Activated CD4-positive, alpha-beta T cell treated with anti-CD3 and anti-CD28 coated beads, Interleukin-2, amount 10 ng/mL, durations not matched to agents 7 days and 5 days (primary cell): ENCODE measurements at regions of chr11 and their contacts with region 1.

Region 1: DNA sequence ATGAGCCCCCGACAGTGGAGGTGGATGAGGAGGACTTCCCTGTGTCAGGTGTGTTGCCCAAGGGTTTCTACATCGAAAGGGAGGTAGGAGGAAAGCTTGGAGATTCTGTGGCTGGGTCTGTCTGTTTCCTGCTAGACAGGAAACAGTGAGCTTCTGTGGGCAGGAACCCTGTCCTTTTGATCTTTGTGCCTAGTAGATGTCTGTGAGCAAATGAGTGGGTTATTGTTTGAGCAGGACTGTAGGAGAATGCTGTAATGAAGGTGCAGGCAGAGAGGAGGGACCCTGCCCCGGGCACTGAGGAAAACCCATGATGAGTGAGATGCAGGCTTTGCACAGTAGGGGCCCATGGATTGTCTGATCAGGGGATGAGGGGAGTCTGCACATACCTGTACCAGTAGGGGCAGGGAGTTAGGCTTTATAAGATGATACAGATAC is 14.0 kb downstream of the USP35 start:
- DNase-seq: peak; percentile 74
- H3K4me3 Mint-ChIP-seq: peak overlapping the region; percentile 72
- H3K27ac Mint-ChIP-seq: peak overlapping the region; percentile 94
- H3K4me1 Mint-ChIP-seq: peaks cover 54% of the 10 kb centered on the region
- H3K27me3 Mint-ChIP-seq: no peaks in the 10 kb centered on the region

Region 2: GRCh38 chr11:78140392-78141077 is 62.2 kb before region 1 on chr11:
- CTCF ChIA-PET with region 1: no interaction called
- POLR2A ChIA-PET with region 1: interaction called, 19 read pairs
- DNase-seq: no peak
- H3K4me3 Mint-ChIP-seq: peak overlapping the region; percentile 98
- H3K27ac Mint-ChIP-seq: peak overlapping the region; percentile 83
- H3K4me1 Mint-ChIP-seq: peaks cover 53% of the 10 kb centered on the region
- H3K27me3 Mint-ChIP-seq: no peaks in the 10 kb centered on the region

Region 3: DNA sequence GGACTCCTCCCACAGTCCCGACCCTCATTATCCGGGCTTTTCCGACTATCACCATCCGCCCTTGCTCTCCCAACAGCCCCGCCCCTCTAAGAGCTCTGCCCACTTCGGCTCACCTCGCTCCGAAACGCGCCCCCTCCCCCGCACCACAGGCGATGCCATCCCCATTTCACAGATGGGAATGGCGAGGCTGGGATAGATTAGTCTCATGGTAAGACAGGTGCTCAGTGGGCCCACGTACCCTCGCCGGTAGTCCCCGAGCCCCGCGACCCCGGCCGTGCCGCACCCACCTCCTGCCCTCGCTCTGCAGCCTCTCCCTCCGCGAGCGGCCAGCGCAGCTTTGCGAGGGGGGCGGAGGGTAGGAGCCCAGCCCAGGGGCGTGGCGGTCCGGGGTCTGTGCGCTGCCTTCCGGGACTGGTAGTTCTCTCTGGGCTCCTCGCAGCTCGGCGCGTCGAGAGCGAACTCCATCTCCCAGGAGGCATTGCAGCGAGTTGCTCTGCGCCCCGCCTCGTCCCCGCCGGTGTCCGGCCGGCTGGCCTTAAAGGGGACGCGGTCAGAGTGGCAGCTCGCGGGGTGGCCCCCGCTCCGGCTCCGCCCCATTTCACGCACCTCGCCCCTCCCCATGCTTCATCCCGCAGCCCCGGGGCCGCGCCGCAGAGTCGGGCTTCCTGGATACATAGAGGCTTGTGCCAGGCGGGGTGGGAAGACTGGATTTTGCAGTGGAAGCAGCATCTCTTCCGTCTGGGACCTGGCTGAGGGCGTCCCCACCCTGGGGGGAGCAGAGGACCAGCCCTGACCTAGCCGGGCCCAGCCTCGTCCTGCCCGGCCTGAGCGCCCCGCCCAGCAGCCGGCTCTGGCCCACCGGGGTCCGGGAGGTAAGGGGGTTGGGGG is 14.2 kb before region 1 on chr11 and contains the starts of genes KCTD21 and USP35:
- CTCF ChIA-PET with region 1: interaction called, 24 read pairs
- POLR2A ChIA-PET with region 1: no interaction called
- DNase-seq: peak; percentile 94
- H3K4me3 Mint-ChIP-seq: peak within 1 kb of the TSS; percentile 90
- H3K27ac Mint-ChIP-seq: peak within 1 kb of the TSS; percentile 89
- H3K4me1 Mint-ChIP-seq: peaks cover 56% of the 10 kb centered on the region
- H3K27me3 Mint-ChIP-seq: no peaks in the 10 kb centered on the region
- total RNA-seq, gene KCTD21: 8.9 TPM
- total RNA-seq, gene USP35: 13.0 to 13.2 TPM

Region 4: GRCh38 chr11:78228467-78228866 is 25.7 kb after region 1 on chr11:
- CTCF ChIA-PET with region 1: no interaction called
- POLR2A ChIA-PET with region 1: no interaction called
- DNase-seq: peak; percentile 49
- H3K4me3 Mint-ChIP-seq: no peak overlapping the region
- H3K27ac Mint-ChIP-seq: no peak overlapping the region
- H3K4me1 Mint-ChIP-seq: peaks cover 57% of the 10 kb centered on the region
- H3K27me3 Mint-ChIP-seq: no peaks in the 10 kb centered on the region

Region 5: GRCh38 chr11:78574386-78575381 is 371.9 kb after region 1 on chr11 and contains the start of gene NARS2:
- CTCF ChIA-PET with region 1: no interaction called
- POLR2A ChIA-PET with region 1: interaction called, 10 read pairs
- DNase-seq: peak; percentile 98
- H3K4me3 Mint-ChIP-seq: peak within 1 kb of the TSS; percentile 90
- H3K27ac Mint-ChIP-seq: peak within 1 kb of the TSS; percentile 92
- H3K4me1 Mint-ChIP-seq: peaks cover 42% of the 10 kb centered on the region
- H3K27me3 Mint-ChIP-seq: no peaks in the 10 kb centered on the region
- total RNA-seq, gene NARS2: 13.2 to 14.3 TPM